CD8-positive, alpha-beta T cell (primary cell): ENCODE measurements at regions of chr14 and their contacts with region 1.

Region 1: GRCh38 chr14:89040460-89041259 is 216.2 kb downstream of the TTC8 start:
- DNase-seq: peak; percentile 56 to 90 (median 74)
- ATAC-seq: peak; percentile 66
- H3K4me3 ChIP-seq: peak overlapping the region; percentile 27 to 55
- H3K4me3 Mint-ChIP-seq: peak overlapping the region; percentile 79
- H3K27ac ChIP-seq: no peak overlapping the region
- H3K27ac Mint-ChIP-seq: no peak overlapping the region
- H3K4me1 ChIP-seq: peaks cover 7% of the 10 kb centered on the region
- H3K4me1 Mint-ChIP-seq: peaks cover 7% of the 10 kb centered on the region
- H3K27me3 ChIP-seq: peaks cover 0 to 14% of the 10 kb centered on the region in 2 experiments
- H3K27me3 Mint-ChIP-seq: peaks cover 29% of the 10 kb centered on the region
- CTCF ChIP-seq: peak; percentile 90

Region 2: GRCh38 chr14:89027097-89027740 is 13.4 kb before region 1 on chr14:
- CTCF ChIA-PET with region 1: interaction called, 13 read pairs
- POLR2A ChIA-PET with region 1: no interaction called
- intact Hi-C with region 1: no loop called
- DNase-seq: peak; percentile 26 to 77 (median 57)
- ATAC-seq: peak; percentile 91
- H3K4me3 ChIP-seq: peak overlapping the region; percentile 33 to 61
- H3K4me3 Mint-ChIP-seq: peak overlapping the region; percentile 69
- H3K27ac ChIP-seq: no peak overlapping the region
- H3K27ac Mint-ChIP-seq: no peak overlapping the region
- H3K4me1 ChIP-seq: peaks cover 13% of the 10 kb centered on the region
- H3K4me1 Mint-ChIP-seq: peaks cover 3% of the 10 kb centered on the region
- H3K27me3 ChIP-seq: peaks cover 21 to 23% of the 10 kb centered on the region in 2 experiments
- H3K27me3 Mint-ChIP-seq: peaks cover 72% of the 10 kb centered on the region
- CTCF ChIP-seq: peak; percentile 74

Region 3: DNA sequence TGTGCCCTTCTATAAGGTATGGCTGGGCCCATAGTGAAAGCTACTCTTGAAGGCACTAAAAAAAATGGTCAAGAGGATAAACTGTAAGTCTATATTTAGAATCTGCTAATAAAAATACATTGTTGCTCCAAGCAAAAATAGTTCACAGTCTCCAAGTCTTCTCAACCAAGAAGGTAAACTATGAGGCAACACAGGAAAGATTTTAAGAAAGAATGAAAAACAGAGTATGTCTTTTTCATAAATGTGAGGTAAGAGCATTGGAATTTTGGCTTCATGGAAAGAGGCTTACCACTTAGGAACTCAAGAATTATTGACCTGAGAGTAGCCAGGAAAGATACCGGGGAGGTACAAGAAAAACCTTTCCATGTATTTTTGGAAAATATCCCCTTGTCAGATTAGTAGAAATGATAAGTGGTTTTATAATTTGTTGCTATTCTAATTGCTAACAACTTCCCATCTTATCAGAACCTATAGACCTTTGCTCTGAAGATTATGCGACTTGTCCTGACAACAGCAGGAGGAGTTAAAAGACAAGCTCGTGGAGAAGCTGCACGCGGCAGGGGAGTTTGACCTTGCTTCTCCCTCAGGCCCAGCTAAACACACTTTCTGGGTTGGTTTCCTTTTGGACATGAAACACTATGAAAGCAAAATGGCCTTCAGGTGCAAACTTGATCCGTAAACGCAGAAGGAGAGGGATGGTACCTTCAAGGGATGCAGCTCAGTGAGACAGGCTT is 138.3 kb after region 1 on chr14:
- CTCF ChIA-PET with region 1: interaction called, 13 read pairs
- POLR2A ChIA-PET with region 1: no interaction called
- intact Hi-C with region 1: no loop called
- DNase-seq: no peak
- ATAC-seq: no peak
- H3K4me3 ChIP-seq: no peak overlapping the region
- H3K4me3 Mint-ChIP-seq: no peak overlapping the region
- H3K27ac ChIP-seq: no peak overlapping the region
- H3K27ac Mint-ChIP-seq: peak overlapping the region; percentile 35
- H3K4me1 ChIP-seq: no peaks in the 10 kb centered on the region
- H3K4me1 Mint-ChIP-seq: peaks cover 17% of the 10 kb centered on the region
- H3K27me3 ChIP-seq: no peaks in the 10 kb centered on the region
- H3K27me3 Mint-ChIP-seq: no peaks in the 10 kb centered on the region
- CTCF ChIP-seq: no peak

Region 4: DNA sequence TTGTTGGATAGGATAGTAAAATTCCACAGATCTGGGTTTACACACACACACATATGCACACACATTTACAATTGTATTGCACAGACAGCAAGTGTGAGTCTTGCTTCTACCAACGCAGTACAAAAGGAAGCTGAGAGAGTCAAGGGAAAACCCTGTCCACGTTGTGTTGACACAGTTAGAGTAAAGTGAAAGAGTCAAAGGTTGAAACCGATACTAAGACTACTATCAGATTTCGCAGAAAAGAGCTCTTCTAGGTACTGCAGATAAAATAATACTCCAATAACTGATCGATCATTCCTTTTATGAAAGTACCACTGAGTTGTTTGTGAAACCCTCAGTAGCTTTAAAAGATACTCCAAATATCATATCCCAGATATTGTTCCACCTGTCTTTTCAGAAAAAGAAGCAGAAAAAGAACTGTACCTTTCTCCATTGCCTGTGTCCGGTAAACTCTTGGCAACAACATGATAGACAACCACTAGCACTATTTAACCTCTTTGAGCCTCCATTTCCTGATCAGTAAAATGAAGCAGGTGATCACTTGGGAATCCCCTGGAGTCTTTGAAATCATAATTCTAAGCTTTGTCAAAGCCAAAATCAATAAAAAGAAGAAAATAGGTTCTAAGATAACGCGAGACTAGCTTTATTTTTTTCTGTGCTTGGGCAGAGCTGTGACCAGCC is 601.0 kb after region 1 on chr14:
- CTCF ChIA-PET with region 1: no interaction called
- POLR2A ChIA-PET with region 1: no interaction called
- intact Hi-C with region 1: loop called in 1 of 2 experiments (anchors 5 kb)
- DNase-seq: peak in 2 of 9 experiments; percentile 47 to 68
- ATAC-seq: peak; percentile 71
- H3K4me3 ChIP-seq: peak overlapping the region; percentile 18 to 19
- H3K4me3 Mint-ChIP-seq: peak overlapping the region; percentile 58
- H3K27ac ChIP-seq: peak overlapping the region; percentile 27 to 68
- H3K27ac Mint-ChIP-seq: peak overlapping the region; percentile 82
- H3K4me1 ChIP-seq: peaks cover 19% of the 10 kb centered on the region
- H3K4me1 Mint-ChIP-seq: peaks cover 51% of the 10 kb centered on the region
- H3K27me3 ChIP-seq: no peaks in the 10 kb centered on the region
- H3K27me3 Mint-ChIP-seq: no peaks in the 10 kb centered on the region
- CTCF ChIP-seq: no peak

Region 5: GRCh38 chr14:89755816-89756215 is 715.2 kb after region 1 on chr14:
- CTCF ChIA-PET with region 1: no interaction called
- POLR2A ChIA-PET with region 1: no interaction called
- intact Hi-C with region 1: no loop called
- DNase-seq: no peak
- ATAC-seq: no peak
- H3K4me3 ChIP-seq: no peak overlapping the region
- H3K4me3 Mint-ChIP-seq: no peak overlapping the region
- H3K27ac ChIP-seq: no peak overlapping the region
- H3K27ac Mint-ChIP-seq: no peak overlapping the region
- H3K4me1 ChIP-seq: peaks cover 11% of the 10 kb centered on the region
- H3K4me1 Mint-ChIP-seq: peaks cover 17% of the 10 kb centered on the region
- H3K27me3 ChIP-seq: no peaks in the 10 kb centered on the region
- H3K27me3 Mint-ChIP-seq: no peaks in the 10 kb centered on the region
- CTCF ChIP-seq: no peak

Region 6: GRCh38 chr14:89899917-89900663 is 859.4 kb after region 1 on chr14:
- CTCF ChIA-PET with region 1: interaction called, 8 read pairs
- POLR2A ChIA-PET with region 1: no interaction called
- intact Hi-C with region 1: loop called (anchors 1 kb)
- DNase-seq: peak in 3 of 9 experiments; percentile 13 to 59 (median 45)
- ATAC-seq: no peak
- H3K4me3 ChIP-seq: no peak overlapping the region
- H3K4me3 Mint-ChIP-seq: no peak overlapping the region
- H3K27ac ChIP-seq: no peak overlapping the region
- H3K27ac Mint-ChIP-seq: no peak overlapping the region
- H3K4me1 ChIP-seq: no peaks in the 10 kb centered on the region
- H3K4me1 Mint-ChIP-seq: peaks cover 18% of the 10 kb centered on the region
- H3K27me3 ChIP-seq: no peaks in the 10 kb centered on the region
- H3K27me3 Mint-ChIP-seq: peaks cover 2% of the 10 kb centered on the region
- CTCF ChIP-seq: peak; percentile 56

Region 7: GRCh38 chr14:89915114-89915878 is 874.6 kb after region 1 on chr14:
- CTCF ChIA-PET with region 1: interaction called, 63 read pairs
- POLR2A ChIA-PET with region 1: no interaction called
- intact Hi-C with region 1: loop called (anchors 1 kb)
- DNase-seq: peak; percentile 24 to 74 (median 60)
- ATAC-seq: peak; percentile 62
- H3K4me3 ChIP-seq: no peak overlapping the region
- H3K4me3 Mint-ChIP-seq: no peak overlapping the region
- H3K27ac ChIP-seq: no peak overlapping the region
- H3K27ac Mint-ChIP-seq: no peak overlapping the region
- H3K4me1 ChIP-seq: peaks cover 3% of the 10 kb centered on the region
- H3K4me1 Mint-ChIP-seq: peaks cover 3% of the 10 kb centered on the region
- H3K27me3 ChIP-seq: no peaks in the 10 kb centered on the region
- H3K27me3 Mint-ChIP-seq: peaks cover 2% of the 10 kb centered on the region
- CTCF ChIP-seq: peak; percentile 97